A549 (cell line): ENCODE measurements at regions of chr11 and their contacts with region 1.

Region 1: DNA sequence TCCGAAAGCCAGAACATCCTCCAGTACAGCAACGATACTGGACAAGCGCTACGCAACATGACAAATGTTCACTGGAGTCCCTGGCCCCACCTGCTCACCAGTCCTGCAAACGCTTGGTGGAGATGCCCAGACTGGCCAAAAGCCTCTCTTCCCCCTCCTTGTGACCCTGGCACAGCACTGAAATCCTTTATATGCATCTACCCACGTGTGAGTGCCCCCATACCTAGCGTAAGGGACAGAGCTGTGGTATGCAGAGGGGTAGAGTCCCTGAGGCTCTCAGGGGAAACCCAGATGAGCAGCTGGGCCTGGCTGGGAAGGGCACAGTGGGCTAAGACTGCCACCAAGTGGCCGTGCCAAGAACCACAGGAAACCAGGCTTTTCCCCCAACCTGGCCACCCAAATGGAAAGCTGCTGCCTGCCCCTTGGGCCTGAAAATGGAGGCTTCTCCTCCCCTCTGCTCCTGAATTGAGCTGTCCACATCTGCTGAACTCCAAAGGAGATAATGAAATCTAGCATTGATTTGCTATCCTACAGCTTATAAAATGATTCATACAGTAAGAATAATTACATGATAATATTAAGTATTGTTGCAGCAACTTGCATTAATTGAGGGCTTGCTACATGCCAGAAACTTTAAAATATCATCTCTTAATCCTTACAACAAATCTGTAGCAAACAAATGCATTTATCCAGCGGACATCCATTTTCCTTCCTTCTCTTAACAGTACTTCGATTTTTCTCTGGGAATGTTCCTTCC is 24.8 kb upstream of the TTC12 start:
- DNase-seq: peak; percentile 32 to 61
- ATAC-seq: peak; percentile 93 to 96
- H3K4me3 ChIP-seq: no peak overlapping the region
- H3K27ac ChIP-seq: no peak overlapping the region
- H3K4me1 ChIP-seq: no peaks in the 10 kb centered on the region
- CTCF ChIP-seq: peak; percentile 65
- EP300 ChIP-seq: no peak
- POLR2A ChIP-seq: no peak
- RAD21 ChIP-seq: peak; percentile 87

Region 2: DNA sequence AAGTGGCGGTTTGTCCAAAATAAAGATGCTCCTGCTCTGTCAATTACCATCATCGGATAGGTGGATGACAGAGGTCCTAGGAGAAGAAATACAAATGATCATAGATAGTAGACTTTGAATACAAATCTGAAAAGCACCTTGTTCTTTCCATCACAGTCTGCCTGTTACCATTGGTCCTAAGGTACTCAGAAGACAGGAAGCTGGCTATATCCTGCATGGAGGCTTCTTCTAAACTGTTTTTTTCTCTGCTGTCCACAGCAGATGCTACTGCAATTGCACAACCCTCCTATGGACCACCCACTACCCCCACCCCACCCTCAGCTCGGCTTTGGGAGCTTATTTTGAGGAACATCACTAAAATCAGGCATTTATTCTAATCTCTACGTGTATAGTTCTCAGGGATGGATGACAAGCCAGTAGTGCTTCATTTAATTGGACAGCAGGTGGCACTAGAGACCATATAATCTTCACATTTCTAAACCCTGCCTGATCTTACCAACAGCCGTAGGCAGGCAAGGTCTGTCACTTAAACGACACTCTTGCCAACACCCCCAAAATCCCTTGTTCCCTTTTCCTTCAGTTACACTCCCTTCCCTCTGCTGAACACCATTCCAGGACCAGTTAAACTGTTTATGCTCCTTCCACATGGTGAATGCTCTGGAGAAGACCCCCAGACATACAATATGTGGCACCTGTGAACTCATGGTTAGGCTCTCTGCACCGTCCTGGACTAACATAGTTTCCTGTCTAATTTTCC is 1070.0 kb before region 1 on chr11:
- CTCF ChIA-PET with region 1: interaction called, 13 read pairs
- POLR2A ChIA-PET with region 1: no interaction called
- DNase-seq: peak; percentile 39 to 72
- ATAC-seq: peak; percentile 97 to 99
- H3K4me3 ChIP-seq: no peak overlapping the region
- H3K27ac ChIP-seq: no peak overlapping the region
- H3K4me1 ChIP-seq: 0 out of 3 replicates have a peak, but pooled peaks cover 8% of the 10 kb centered on the region
- CTCF ChIP-seq: peak; percentile 71
- EP300 ChIP-seq: no peak
- POLR2A ChIP-seq: no peak
- RAD21 ChIP-seq: peak; percentile 85

Region 3: GRCh38 chr11:112288021-112288420 is 1001.6 kb before region 1 on chr11:
- CTCF ChIA-PET with region 1: interaction called, 13 read pairs
- POLR2A ChIA-PET with region 1: no interaction called
- DNase-seq: no peak
- ATAC-seq: no peak
- H3K4me3 ChIP-seq: no peak overlapping the region
- H3K27ac ChIP-seq: no peak overlapping the region
- H3K4me1 ChIP-seq: peaks cover 2% of the 10 kb centered on the region; the same call in 2 of the 3 replicates
- CTCF ChIP-seq: no peak
- EP300 ChIP-seq: no peak
- POLR2A ChIP-seq: no peak
- RAD21 ChIP-seq: no peak

Region 4: DNA sequence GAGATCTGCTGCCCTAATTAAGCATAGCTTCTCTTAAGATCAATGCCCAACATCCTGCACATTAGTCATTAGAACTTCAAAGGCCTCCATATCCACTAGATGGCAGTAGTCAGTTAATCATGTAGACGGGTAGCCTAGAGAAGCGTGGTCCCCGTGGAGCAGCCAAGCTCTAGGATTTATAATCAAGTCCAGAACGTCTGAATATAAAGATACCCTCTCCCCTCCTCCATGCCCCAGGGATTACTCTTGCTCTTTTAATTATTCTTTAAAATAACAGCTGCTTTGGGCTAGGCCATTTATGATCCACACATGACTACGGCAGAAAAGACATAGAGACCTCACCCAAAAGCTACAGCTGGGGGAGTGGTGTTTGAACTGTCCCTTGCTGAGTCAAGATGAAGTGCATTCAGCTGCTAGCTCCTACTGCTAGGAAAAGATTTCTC is 701.3 kb before region 1 on chr11:
- CTCF ChIA-PET with region 1: interaction called, 44 read pairs
- POLR2A ChIA-PET with region 1: no interaction called
- DNase-seq: peak; percentile 44 to 69
- ATAC-seq: peak; percentile 86 to 94; a peak in 5 of 6 replicates
- H3K4me3 ChIP-seq: no peak overlapping the region
- H3K27ac ChIP-seq: no peak overlapping the region
- H3K4me1 ChIP-seq: no peaks in the 10 kb centered on the region
- CTCF ChIP-seq: peak; percentile 51
- EP300 ChIP-seq: no peak
- POLR2A ChIP-seq: no peak
- RAD21 ChIP-seq: peak; percentile 60 to 63

Region 5: GRCh38 chr11:113274713-113275582 is 14.7 kb before region 1 on chr11:
- CTCF ChIA-PET with region 1: interaction called, 10 read pairs
- POLR2A ChIA-PET with region 1: no interaction called
- DNase-seq: peak; percentile 3
- ATAC-seq: peak in 1 of 2 experiments; percentile 56; a peak in 3 of 6 replicates
- H3K4me3 ChIP-seq: no peak overlapping the region
- H3K27ac ChIP-seq: no peak overlapping the region
- H3K4me1 ChIP-seq: no peaks in the 10 kb centered on the region
- CTCF ChIP-seq: no peak
- EP300 ChIP-seq: no peak
- POLR2A ChIP-seq: no peak
- RAD21 ChIP-seq: no peak

Region 6: GRCh38 chr11:113457784-113458183 is 168.2 kb after region 1 on chr11:
- CTCF ChIA-PET with region 1: no interaction called
- POLR2A ChIA-PET with region 1: no interaction called
- DNase-seq: no peak
- ATAC-seq: no peak
- H3K4me3 ChIP-seq: no peak overlapping the region
- H3K27ac ChIP-seq: no peak overlapping the region
- H3K4me1 ChIP-seq: no peaks in the 10 kb centered on the region
- CTCF ChIP-seq: no peak
- EP300 ChIP-seq: no peak
- POLR2A ChIP-seq: no peak
- RAD21 ChIP-seq: no peak

Region 7: DNA sequence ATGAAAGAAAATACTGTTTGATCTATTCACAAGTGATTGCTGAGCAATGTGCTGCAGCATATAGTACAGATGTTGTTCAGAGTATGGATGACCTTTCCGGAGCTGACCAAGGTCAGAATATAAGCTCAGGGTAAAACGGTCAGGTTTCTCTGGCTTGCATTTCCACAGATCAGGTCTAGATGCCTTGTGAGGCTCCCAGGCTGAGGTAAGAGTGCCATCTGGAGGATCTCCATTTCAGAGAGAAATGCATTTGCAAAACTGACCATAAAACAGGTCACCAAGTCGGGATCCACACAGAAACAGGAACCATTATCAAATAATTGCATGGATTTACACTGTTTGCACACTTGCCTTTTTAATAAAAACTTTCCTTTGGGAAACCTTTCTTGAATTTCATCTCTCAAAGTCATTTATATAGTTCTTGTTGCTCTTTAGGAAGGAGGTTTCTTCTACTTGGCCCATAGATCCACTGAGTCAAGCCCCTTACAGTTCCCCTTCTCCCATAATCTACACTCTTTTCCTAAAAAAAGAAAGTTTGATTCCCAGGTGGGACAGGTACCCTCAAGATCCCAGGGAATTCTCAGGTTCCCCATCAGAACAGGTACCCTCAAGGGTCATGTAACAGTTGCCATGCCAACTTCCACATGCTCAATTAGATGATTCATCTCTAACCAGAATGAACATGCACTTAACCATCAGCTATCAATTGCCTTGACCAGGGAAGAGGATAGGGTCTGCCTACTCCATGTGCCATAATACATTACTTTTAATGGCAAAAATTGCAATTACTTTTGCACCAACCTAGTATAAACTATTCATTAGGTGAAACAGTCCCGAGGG is 441.5 kb after region 1 on chr11:
- CTCF ChIA-PET with region 1: interaction called, 11 read pairs
- POLR2A ChIA-PET with region 1: no interaction called
- DNase-seq: peak; percentile 5 to 49
- ATAC-seq: peak; percentile 72 to 78; a peak in 4 of 6 replicates
- H3K4me3 ChIP-seq: no peak overlapping the region
- H3K27ac ChIP-seq: no peak overlapping the region
- H3K4me1 ChIP-seq: no peaks in the 10 kb centered on the region
- CTCF ChIP-seq: peak; percentile 58
- EP300 ChIP-seq: no peak
- POLR2A ChIP-seq: no peak
- RAD21 ChIP-seq: peak; percentile 70 to 77